AG04450 (cell line): ENCODE measurements at regions of chr13 and their contacts with region 1.

Region 1: DNA sequence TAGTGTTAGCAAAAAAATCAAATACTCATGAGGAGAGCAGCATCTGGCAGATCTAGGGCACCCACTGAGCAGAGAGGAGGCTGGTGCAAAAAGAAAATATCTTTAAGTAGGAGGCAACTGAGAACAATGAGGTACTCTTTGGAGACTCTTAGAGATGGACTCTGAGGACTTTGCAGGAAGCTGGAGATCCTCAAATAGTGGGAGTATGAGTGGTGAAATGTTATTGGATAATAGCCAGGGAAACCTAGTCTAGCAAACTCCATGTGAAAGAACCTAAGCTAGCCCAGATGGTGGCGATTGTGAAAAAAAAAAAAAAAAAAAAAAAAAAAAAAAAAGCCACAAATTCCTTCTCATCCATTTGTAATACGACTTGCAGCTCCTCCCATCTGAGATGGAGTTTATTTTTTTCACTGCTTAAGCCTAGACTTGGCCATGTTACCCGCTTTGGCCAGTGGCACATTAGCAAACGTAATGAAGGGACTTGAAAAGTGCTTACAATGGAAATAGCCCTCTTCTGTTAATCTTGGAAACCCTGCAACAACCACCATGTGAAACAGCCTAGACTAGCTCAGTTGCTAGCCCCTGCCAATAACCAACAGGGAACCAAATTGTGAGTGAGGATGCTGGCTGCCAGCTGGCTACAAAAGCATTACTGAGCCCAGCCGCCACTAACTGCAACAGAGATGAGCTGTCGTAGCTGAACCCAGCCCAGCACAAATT is 476.2 kb downstream of the KLF12 start:
- DNase-seq: no peak
- H3K4me3 ChIP-seq: no peak overlapping the region
- H3K27ac ChIP-seq: no peak overlapping the region
- H3K27me3 ChIP-seq: peaks cover 3% of the 10 kb centered on the region
- CTCF ChIP-seq: no peak

Region 2: GRCh38 chr13:73001971-73002370 is 656.0 kb before region 1 on chr13:
- CTCF ChIA-PET with region 1: no interaction called
- POLR2A ChIA-PET with region 1: no interaction called
- DNase-seq: no peak
- H3K4me3 ChIP-seq: no peak overlapping the region
- H3K27ac ChIP-seq: no peak overlapping the region
- H3K27me3 ChIP-seq: no peaks in the 10 kb centered on the region
- CTCF ChIP-seq: no peak

Region 3: GRCh38 chr13:73467125-73467524 is 190.9 kb before region 1 on chr13:
- CTCF ChIA-PET with region 1: no interaction called
- POLR2A ChIA-PET with region 1: interaction called, 11 read pairs
- DNase-seq: no peak
- H3K4me3 ChIP-seq: no peak overlapping the region
- H3K27ac ChIP-seq: no peak overlapping the region
- H3K27me3 ChIP-seq: no peaks in the 10 kb centered on the region
- CTCF ChIP-seq: no peak

Region 4: GRCh38 chr13:74280795-74281490 is 623.0 kb after region 1 on chr13:
- CTCF ChIA-PET with region 1: no interaction called
- POLR2A ChIA-PET with region 1: no interaction called
- DNase-seq: no peak
- H3K4me3 ChIP-seq: no peak overlapping the region
- H3K27ac ChIP-seq: no peak overlapping the region
- H3K27me3 ChIP-seq: no peaks in the 10 kb centered on the region
- CTCF ChIP-seq: no peak